ENCODE measurements at regions of chr20 and their contacts with region 1.

Region 1: GRCh38 chr20:45987108-45987780 is 15.2 kb upstream of the ZNF335 start:
- DNase-seq: peak; percentile 88
- H3K27ac ChIP-seq: no peak overlapping the region
- CTCF ChIP-seq: peak; percentile 95

Region 2: GRCh38 chr20:45971675-45972499 is 15.4 kb before region 1 on chr20 and contains the start of gene ZNF335:
- CTCF ChIA-PET with region 1: interaction called, 32 read pairs
- POLR2A ChIA-PET with region 1: no interaction called
- DNase-seq: peak; percentile 100
- H3K27ac ChIP-seq: peak within 1 kb of the TSS; percentile 99
- CTCF ChIP-seq: no peak

Region 3: GRCh38 chr20:45998761-45999160 is 11.5 kb after region 1 on chr20:
- CTCF ChIA-PET with region 1: interaction called, 14 read pairs
- POLR2A ChIA-PET with region 1: no interaction called
- DNase-seq: no peak
- H3K27ac ChIP-seq: no peak overlapping the region
- CTCF ChIP-seq: no peak

Region 4: DNA sequence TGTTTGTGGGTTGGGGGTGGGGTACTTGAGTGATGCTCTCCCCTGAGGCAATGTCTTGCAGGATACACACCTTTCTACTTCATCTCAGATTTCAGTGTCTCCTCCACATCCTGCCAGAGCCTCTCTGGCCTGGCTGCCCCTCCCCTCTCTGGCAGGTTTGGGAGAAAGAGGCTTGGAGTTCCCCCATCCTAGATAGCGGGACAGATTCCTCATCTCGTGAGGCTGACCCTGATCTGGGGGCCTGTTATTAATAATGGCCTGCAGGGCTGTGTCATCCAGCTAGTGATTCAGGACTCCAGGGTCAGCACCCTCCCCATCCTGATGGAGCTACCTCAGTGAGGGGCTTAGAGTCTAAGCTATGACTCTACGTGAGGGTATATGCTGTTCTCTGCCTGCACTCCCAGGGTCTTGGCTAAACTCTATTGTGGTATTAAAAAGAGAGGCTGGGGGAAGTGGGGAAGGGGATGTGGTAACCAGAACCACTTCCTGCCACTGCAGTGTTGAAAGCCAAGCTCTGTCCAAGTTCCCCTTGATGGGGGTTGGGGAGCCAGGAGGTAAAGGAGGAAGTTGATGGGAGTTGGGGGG is 17.7 kb after region 1 on chr20:
- CTCF ChIA-PET with region 1: interaction called, 14 read pairs
- POLR2A ChIA-PET with region 1: no interaction called
- DNase-seq: peak; percentile 84
- H3K27ac ChIP-seq: no peak overlapping the region
- CTCF ChIP-seq: no peak

Region 5: GRCh38 chr20:46013826-46014516 is 26.7 kb after region 1 on chr20:
- CTCF ChIA-PET with region 1: interaction called, 82 read pairs
- POLR2A ChIA-PET with region 1: no interaction called
- DNase-seq: peak; percentile 83
- H3K27ac ChIP-seq: no peak overlapping the region
- CTCF ChIP-seq: peak; percentile 100

Region 6: DNA sequence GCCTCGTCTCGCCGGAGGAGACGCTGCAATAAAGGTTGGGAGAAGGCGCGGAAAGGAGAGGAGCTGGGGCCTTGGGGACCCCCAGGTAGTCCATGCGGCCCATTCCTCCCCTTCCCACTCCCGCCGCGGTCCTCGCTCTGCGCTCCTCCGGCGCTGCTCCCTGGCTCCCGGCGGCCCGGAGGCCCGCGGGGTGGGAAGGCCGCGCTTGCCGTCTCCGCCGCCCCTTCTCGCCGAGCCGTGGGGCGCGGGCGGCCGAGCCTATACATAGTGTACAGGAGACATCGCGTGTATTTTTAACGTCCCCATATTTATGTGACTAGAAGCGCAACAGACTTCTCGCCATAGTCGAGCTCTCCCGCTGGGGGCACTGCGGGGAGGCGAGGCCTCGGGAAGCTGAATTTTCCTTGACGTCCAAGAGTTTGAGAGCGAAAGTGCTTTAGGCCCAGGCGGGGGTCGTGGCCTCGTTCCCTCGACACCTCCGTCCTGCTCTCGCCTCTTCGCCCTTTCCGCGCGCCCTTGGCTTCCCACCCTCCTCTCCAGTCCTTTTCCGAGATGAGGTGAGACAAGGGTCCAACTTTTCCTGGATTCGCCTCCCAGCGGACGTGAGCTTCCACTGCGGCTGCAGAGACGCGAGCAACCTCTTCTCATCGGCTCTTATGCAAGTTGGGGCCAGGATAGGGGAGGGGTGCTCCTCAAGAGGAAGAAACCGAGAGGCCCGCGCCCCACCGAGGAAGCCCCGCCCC is 70.8 kb after region 1 on chr20:
- CTCF ChIA-PET with region 1: interaction called, 13 read pairs
- POLR2A ChIA-PET with region 1: no interaction called
- DNase-seq: peak; percentile 32
- H3K27ac ChIP-seq: no peak overlapping the region
- CTCF ChIP-seq: peak; percentile 22; the same call in 1 of the 2 replicates

Region 7: GRCh38 chr20:46089167-46089416 is 101.8 kb after region 1 on chr20:
- CTCF ChIA-PET with region 1: interaction called, 11 read pairs
- POLR2A ChIA-PET with region 1: no interaction called
- DNase-seq: peak; percentile 53
- H3K27ac ChIP-seq: peak overlapping the region; percentile 90
- CTCF ChIP-seq: no peak